Activated CD4-positive, alpha-beta memory T cell treated with anti-CD3 and anti-CD28 coated beads for 36 hours (primary cell): ENCODE measurements at regions of chr5 and their contacts with region 1.

Region 1: DNA sequence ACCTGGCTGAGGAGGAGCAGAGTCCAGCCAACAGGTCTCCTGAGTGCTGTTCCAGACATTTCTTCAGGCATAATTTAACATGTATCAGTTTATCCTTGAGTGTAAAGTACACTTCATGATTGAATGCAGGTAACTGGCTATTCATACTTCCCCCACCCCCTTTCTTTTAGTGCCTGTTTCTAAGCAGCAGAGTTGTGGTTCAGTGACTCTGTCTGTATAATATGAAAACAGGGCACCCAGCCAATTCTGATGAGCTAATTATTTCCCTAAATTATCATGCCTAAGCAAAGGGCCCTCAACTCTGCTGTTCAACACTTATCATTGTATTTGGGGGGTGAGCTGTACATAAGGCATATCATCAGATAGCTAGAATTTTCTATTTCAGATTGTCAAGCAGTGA is 51.9 kb upstream of the ZSWIM6 start:
- DNase-seq: no peak
- H3K4me3 Mint-ChIP-seq: no peak overlapping the region
- H3K27ac Mint-ChIP-seq: no peak overlapping the region
- H3K4me1 Mint-ChIP-seq: peaks cover 28% of the 10 kb centered on the region
- H3K27me3 Mint-ChIP-seq: no peaks in the 10 kb centered on the region

Region 2: GRCh38 chr5:60856066-60856465 is 424.1 kb before region 1 on chr5:
- CTCF ChIA-PET with region 1: no interaction called
- POLR2A ChIA-PET with region 1: no interaction called
- intact Hi-C with region 1: no loop called
- DNase-seq: no peak
- H3K4me3 Mint-ChIP-seq: no peak overlapping the region
- H3K27ac Mint-ChIP-seq: no peak overlapping the region
- H3K4me1 Mint-ChIP-seq: no peaks in the 10 kb centered on the region
- H3K27me3 Mint-ChIP-seq: no peaks in the 10 kb centered on the region

Region 3: GRCh38 chr5:60972231-60972630 is 308.0 kb before region 1 on chr5:
- CTCF ChIA-PET with region 1: no interaction called
- POLR2A ChIA-PET with region 1: no interaction called
- intact Hi-C with region 1: loop called (anchors 2 kb)
- DNase-seq: peak; percentile 73
- H3K4me3 Mint-ChIP-seq: no peak overlapping the region
- H3K27ac Mint-ChIP-seq: no peak overlapping the region
- H3K4me1 Mint-ChIP-seq: peaks cover 14% of the 10 kb centered on the region
- H3K27me3 Mint-ChIP-seq: no peaks in the 10 kb centered on the region

Region 4: DNA sequence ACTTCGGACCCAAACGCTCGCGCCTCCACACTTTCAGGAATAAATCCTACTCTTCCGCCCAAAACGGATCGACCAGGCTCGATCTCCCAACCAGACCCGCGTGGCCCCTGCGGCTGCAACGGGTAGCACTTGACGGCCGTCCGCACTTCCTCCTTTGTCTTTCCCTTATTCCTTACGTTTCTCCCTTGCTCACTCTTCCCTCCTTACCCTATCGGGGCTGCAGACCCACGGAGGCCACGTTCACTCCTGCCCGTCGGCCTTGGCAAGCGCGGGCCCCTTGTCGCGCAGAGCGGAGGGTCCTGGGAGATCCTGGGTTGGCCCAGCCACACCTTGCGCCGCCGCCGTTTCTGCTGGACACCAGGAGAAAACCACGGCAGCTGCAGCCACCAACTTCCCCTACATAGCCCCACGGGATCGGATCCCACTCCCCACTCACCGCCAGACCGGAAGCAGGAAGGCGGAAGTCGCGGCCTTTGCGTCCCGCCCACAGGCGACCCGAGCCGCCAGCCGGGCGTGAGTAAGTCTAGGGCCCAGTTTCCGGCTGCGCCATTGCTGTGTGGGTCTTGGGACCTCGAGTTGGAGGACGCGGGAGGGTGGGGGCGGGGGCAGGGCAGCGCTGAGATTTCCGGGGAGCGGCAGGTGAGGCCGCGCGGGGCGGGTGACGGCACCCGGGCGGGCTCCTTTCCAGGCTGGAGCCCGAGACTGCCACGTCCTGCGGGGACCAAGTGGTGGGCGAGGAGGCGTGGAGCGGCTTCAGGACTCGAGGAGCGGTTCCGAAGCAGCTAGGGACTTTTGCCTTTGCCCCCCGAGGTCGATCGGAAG is 118.0 kb before region 1 on chr5 and contains the start of gene SMIM15:
- CTCF ChIA-PET with region 1: no interaction called
- POLR2A ChIA-PET with region 1: no interaction called
- intact Hi-C with region 1: loop called (anchors 5 kb)
- DNase-seq: peak; percentile 91
- H3K4me3 Mint-ChIP-seq: peak within 1 kb of the TSS; percentile 96
- H3K27ac Mint-ChIP-seq: peak within 1 kb of the TSS; percentile 96
- H3K4me1 Mint-ChIP-seq: peaks cover 35% of the 10 kb centered on the region
- H3K27me3 Mint-ChIP-seq: no peaks in the 10 kb centered on the region
- total RNA-seq, gene SMIM15: 56.9 to 67.2 TPM

Region 5: DNA sequence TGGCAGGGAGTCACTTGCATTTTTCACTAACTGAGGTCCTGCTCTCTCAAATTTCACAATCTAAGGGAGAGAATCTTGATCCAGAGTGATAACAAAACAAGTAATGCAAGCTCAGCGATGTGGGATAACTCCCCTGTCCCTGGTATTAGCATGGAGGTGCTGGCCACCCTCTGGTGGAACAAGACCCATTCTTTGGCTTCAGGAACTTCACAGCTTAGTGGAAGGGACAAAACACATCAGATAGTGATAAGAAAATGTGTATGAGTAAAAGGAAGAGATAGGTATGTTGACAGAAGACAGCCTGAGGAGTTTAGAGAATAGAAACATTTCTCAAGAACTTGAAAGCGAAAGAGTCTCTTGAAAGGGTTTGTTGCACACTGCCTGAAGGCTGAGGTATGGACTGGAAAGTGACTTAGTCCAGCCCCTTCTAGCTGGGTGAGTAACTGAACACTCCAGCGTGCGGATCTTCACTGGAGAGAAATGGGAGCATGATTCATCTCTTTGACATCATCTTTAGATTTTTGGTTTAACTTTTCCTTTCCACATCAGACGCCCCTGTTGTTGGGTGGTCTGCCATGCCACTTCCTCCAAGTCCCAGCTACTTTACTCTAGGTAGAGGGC is 26.4 kb after region 1 on chr5:
- CTCF ChIA-PET with region 1: interaction called, 3 read pairs
- POLR2A ChIA-PET with region 1: no interaction called
- intact Hi-C with region 1: loop called (anchors 1 kb)
- DNase-seq: peak; percentile 62
- H3K4me3 Mint-ChIP-seq: no peak overlapping the region
- H3K27ac Mint-ChIP-seq: peak overlapping the region; percentile 64
- H3K4me1 Mint-ChIP-seq: peaks cover 26% of the 10 kb centered on the region
- H3K27me3 Mint-ChIP-seq: peaks cover 16% of the 10 kb centered on the region

Region 6: DNA sequence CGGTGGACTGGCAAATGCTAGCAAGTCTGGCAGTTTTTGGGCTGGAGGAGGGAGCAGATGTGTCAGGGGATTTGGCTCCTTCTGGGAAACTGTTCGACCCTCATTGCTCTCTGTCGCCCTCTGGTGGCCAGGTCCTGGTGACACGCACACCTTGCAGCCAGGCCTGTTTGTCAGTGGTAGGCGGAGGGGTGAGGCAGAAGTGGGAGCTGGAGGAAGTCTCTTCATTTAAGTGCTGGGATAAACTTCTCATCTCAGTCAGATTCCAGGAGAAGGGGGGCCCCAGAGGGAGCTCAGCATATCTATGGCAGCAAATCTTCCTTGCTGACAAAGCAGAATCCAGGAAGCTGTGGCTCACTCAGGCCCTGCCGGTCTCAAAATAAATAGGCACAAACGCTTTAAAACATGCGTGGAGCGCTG is 378.4 kb after region 1 on chr5:
- CTCF ChIA-PET with region 1: interaction called, 5 read pairs
- POLR2A ChIA-PET with region 1: no interaction called
- intact Hi-C with region 1: loop called (anchors 1 kb)
- DNase-seq: peak; percentile 86
- H3K4me3 Mint-ChIP-seq: no peak overlapping the region
- H3K27ac Mint-ChIP-seq: no peak overlapping the region
- H3K4me1 Mint-ChIP-seq: peaks cover 2% of the 10 kb centered on the region
- H3K27me3 Mint-ChIP-seq: peaks cover 8% of the 10 kb centered on the region